CD14-positive monocyte (primary cell): ENCODE measurements at regions of chr11 and their contacts with region 1.

Region 1: GRCh38 chr11:63871962-63872799 is 33.3 kb downstream of the MARK2 start:
- DNase-seq: peak; percentile 96 to 99 (median 98)
- H3K4me3 ChIP-seq: peak overlapping the region in 1 of 3 experiments; percentile 65
- H3K4me3 Mint-ChIP-seq: peak overlapping the region; percentile 28 to 81
- H3K27ac ChIP-seq: peak overlapping the region; percentile 44 to 67
- H3K27ac Mint-ChIP-seq: peak overlapping the region; percentile 74 to 96 (median 92)
- H3K4me1 ChIP-seq: peaks cover 73 to 78% of the 10 kb centered on the region in 2 donors
- H3K4me1 Mint-ChIP-seq: peaks cover 73% of the 10 kb centered on the region
- H3K27me3 ChIP-seq: no peaks in the 10 kb centered on the region
- H3K27me3 Mint-ChIP-seq: no peaks in the 10 kb centered on the region
- CTCF ChIP-seq: peak; percentile 53

Region 2: DNA sequence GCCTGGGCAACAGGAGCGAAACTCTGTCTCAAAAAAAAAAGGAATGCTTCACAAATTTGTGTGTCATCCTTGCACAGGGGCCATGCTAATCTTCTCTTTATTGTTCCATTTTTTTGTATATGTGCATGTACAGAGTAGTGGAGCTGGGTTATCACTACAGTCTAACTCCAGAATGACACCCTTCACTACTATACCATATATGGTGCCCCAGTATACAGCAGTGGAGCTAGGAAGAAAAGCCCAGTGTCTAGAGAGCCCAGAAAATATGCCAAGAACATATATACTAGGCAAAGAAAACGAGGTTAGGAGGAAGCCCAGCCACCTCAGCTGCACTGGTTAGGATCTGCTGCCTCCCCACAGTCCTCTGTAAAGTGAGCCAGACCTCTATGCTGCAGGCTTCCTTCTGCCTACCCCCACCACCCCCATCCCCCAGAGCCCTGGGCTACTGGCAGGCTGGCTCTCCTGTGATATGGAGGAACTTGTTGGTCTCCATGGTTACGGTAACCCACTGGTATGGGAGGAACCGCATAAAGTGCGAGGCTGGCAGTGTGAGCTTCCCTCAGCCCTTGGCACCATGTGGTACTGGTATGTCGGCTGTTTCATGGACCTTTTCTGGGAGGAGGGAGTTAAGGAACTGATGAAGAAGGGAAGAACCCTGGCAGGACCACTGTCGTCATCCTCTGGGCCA is 10.5 kb after region 1 on chr11:
- intact Hi-C with region 1: no loop called
- DNase-seq: peak; percentile 68 to 82 (median 77)
- H3K4me3 ChIP-seq: no peak overlapping the region
- H3K4me3 Mint-ChIP-seq: peak overlapping the region in 1 of 2 donors; percentile 15
- H3K27ac ChIP-seq: peak overlapping the region; percentile 20 to 58
- H3K27ac Mint-ChIP-seq: peak overlapping the region; percentile 63 to 88 (median 80)
- H3K4me1 ChIP-seq: peaks cover 36 to 39% of the 10 kb centered on the region in 2 donors
- H3K4me1 Mint-ChIP-seq: peaks cover 70% of the 10 kb centered on the region
- H3K27me3 ChIP-seq: no peaks in the 10 kb centered on the region
- H3K27me3 Mint-ChIP-seq: no peaks in the 10 kb centered on the region
- CTCF ChIP-seq: no peak

Region 3: DNA sequence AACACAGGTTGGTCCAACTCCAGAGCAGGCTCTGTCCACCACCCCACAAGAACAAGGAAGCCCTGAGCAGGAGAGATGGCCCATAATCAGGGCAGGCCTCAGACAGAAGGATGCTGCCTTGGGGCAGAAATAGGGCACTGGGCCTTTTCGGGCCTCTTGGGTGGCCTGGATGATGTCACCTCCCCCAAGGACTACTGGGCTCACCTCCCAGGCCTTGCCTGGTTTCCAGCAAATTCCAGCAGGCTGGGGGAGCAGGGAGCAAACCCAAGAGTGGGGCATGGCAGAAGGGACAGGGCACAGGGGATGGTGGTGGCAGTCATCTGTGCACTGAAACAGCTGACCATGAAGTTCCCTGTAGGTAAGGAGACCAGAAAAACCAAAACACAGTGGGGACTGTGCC is 61.3 kb after region 1 on chr11:
- intact Hi-C with region 1: no loop called
- DNase-seq: no peak
- H3K4me3 ChIP-seq: no peak overlapping the region
- H3K4me3 Mint-ChIP-seq: no peak overlapping the region
- H3K27ac ChIP-seq: no peak overlapping the region
- H3K27ac Mint-ChIP-seq: no peak overlapping the region
- H3K4me1 ChIP-seq: peaks cover 6 to 7% of the 10 kb centered on the region in 2 donors
- H3K4me1 Mint-ChIP-seq: peaks cover 8% of the 10 kb centered on the region
- H3K27me3 ChIP-seq: no peaks in the 10 kb centered on the region
- H3K27me3 Mint-ChIP-seq: peaks cover 8 to 13% (median 12%) of the 10 kb centered on the region in 3 donors
- CTCF ChIP-seq: no peak

Region 4: GRCh38 chr11:63945477-63946163 is 73.4 kb after region 1 on chr11:
- intact Hi-C with region 1: loop called in 1 of 2 experiments (anchors 2 kb)
- DNase-seq: peak; percentile 32 to 47 (median 42)
- H3K4me3 ChIP-seq: no peak overlapping the region
- H3K4me3 Mint-ChIP-seq: no peak overlapping the region
- H3K27ac ChIP-seq: no peak overlapping the region
- H3K27ac Mint-ChIP-seq: no peak overlapping the region
- H3K4me1 ChIP-seq: peaks cover 11 to 14% of the 10 kb centered on the region in 2 donors
- H3K4me1 Mint-ChIP-seq: peaks cover 17% of the 10 kb centered on the region
- H3K27me3 ChIP-seq: no peaks in the 10 kb centered on the region
- H3K27me3 Mint-ChIP-seq: peaks cover 0 to 3% (median 0%) of the 10 kb centered on the region in 3 donors
- CTCF ChIP-seq: peak; percentile 75